SK-N-SH (cell line): ENCODE measurements at regions of chr2 and their contacts with region 1.

Region 1: DNA sequence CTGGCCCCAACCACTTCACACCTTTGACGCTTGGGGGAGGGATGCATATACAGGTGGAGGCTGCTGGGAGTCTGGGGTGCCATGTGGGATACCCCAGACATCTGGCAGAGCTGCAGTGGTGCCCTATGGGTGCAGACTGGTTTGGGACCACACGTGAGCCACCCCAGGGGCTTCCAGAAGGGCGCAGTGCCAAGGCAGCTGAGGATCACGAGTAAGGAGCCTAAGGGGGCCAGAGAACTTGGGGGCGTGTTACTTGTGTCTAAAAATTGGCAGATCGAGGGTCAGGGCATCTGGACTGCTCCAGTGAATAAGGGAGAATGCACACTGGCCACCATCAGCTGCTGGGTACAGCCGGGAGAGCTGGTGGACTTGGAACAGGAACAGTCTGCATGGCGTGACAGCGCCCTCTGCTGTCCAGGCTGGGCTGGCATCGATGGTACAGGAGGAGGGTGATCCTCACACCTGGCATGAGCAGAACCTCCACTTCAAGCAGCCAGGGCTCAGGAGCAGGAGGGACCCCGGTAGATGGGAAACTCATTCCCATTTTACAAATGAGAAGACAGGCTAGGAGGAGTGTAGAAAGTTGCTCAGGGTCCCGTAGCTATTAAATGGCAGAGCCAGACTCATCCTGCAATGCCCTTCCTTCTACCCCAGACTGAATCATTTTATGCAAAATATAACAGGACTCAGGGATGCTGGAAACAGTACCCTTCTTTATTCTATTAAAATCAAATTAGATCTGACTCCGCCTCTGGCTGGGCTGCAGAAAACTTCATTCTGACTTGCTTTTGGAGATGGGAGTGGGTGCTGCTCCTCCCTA is 60.4 kb downstream of the ATOH8 start:
- DNase-seq: peak; percentile 92
- H3K4me3 ChIP-seq: no peak overlapping the region
- H3K27ac ChIP-seq: no peak overlapping the region
- H3K4me1 ChIP-seq: peaks cover 0 to 17% of the 10 kb centered on the region in 2 experiments; a peak in 1 of 4 replicates
- H3K27me3 ChIP-seq: no peaks in the 10 kb centered on the region
- CTCF ChIP-seq: peak; percentile 94
- EP300 ChIP-seq: no peak
- RAD21 ChIP-seq: peak; percentile 100

Region 2: GRCh38 chr2:85678794-85679672 is 135.2 kb before region 1 on chr2:
- CTCF ChIA-PET with region 1: interaction called, 15 read pairs
- POLR2A ChIA-PET with region 1: no interaction called
- DNase-seq: peak; percentile 92
- H3K4me3 ChIP-seq: no peak overlapping the region
- H3K27ac ChIP-seq: no peak overlapping the region
- H3K4me1 ChIP-seq: peaks cover 0 to 7% of the 10 kb centered on the region in 2 experiments; a peak in 1 of 4 replicates
- H3K27me3 ChIP-seq: no peaks in the 10 kb centered on the region
- CTCF ChIP-seq: peak; percentile 93
- EP300 ChIP-seq: no peak
- RAD21 ChIP-seq: peak; percentile 82

Region 3: GRCh38 chr2:85712849-85713602 is 101.2 kb before region 1 on chr2:
- CTCF ChIA-PET with region 1: interaction called, 47 read pairs
- POLR2A ChIA-PET with region 1: no interaction called
- DNase-seq: no peak
- H3K4me3 ChIP-seq: no peak overlapping the region
- H3K27ac ChIP-seq: no peak overlapping the region
- H3K4me1 ChIP-seq: peaks cover 9 to 16% of the 10 kb centered on the region in 2 experiments; a peak in 3 of 4 replicates
- H3K27me3 ChIP-seq: no peaks in the 10 kb centered on the region
- CTCF ChIP-seq: no peak
- EP300 ChIP-seq: no peak
- RAD21 ChIP-seq: no peak

Region 4: GRCh38 chr2:85750587-85751575 is 63.3 kb before region 1 on chr2:
- CTCF ChIA-PET with region 1: interaction called, 626 read pairs
- POLR2A ChIA-PET with region 1: no interaction called
- DNase-seq: peak; percentile 82
- H3K4me3 ChIP-seq: no peak overlapping the region
- H3K27ac ChIP-seq: no peak overlapping the region
- H3K4me1 ChIP-seq: peaks cover 21 to 32% of the 10 kb centered on the region in 2 experiments; a peak in 3 of 4 replicates
- H3K27me3 ChIP-seq: no peaks in the 10 kb centered on the region
- CTCF ChIP-seq: peak; percentile 88
- EP300 ChIP-seq: no peak
- RAD21 ChIP-seq: peak; percentile 89

Region 5: GRCh38 chr2:85777441-85777861 is 36.7 kb before region 1 on chr2:
- CTCF ChIA-PET with region 1: interaction called, 80 read pairs
- POLR2A ChIA-PET with region 1: no interaction called
- DNase-seq: no peak
- H3K4me3 ChIP-seq: no peak overlapping the region
- H3K27ac ChIP-seq: no peak overlapping the region
- H3K4me1 ChIP-seq: peaks cover 22 to 28% of the 10 kb centered on the region in 2 experiments
- H3K27me3 ChIP-seq: no peaks in the 10 kb centered on the region
- CTCF ChIP-seq: no peak
- EP300 ChIP-seq: no peak
- RAD21 ChIP-seq: no peak

Region 6: GRCh38 chr2:85797921-85798320 is 16.3 kb before region 1 on chr2:
- CTCF ChIA-PET with region 1: interaction called, 50 read pairs
- POLR2A ChIA-PET with region 1: no interaction called
- DNase-seq: peak; percentile 72
- H3K4me3 ChIP-seq: no peak overlapping the region
- H3K27ac ChIP-seq: no peak overlapping the region
- H3K4me1 ChIP-seq: peaks cover 23 to 27% of the 10 kb centered on the region in 2 experiments; a peak in 3 of 4 replicates
- H3K27me3 ChIP-seq: no peaks in the 10 kb centered on the region
- CTCF ChIP-seq: peak; percentile 66
- EP300 ChIP-seq: no peak
- RAD21 ChIP-seq: peak; percentile 79